Mammary epithelial cell (primary cell): ENCODE measurements at regions of chr16 and their contacts with region 1.

Region 1: GRCh38 chr16:70715055-70715858 is 29.4 kb upstream of the MTSS2 start:
- DNase-seq: peak; percentile 99
- H3K4me3 ChIP-seq: no peak overlapping the region
- H3K27ac ChIP-seq: peak overlapping the region; percentile 67
- H3K4me1 ChIP-seq: peaks cover 34% of the 10 kb centered on the region
- H3K27me3 ChIP-seq: no peaks in the 10 kb centered on the region
- CTCF ChIP-seq: peak in 1 of 2 donors; percentile 43

Region 2: DNA sequence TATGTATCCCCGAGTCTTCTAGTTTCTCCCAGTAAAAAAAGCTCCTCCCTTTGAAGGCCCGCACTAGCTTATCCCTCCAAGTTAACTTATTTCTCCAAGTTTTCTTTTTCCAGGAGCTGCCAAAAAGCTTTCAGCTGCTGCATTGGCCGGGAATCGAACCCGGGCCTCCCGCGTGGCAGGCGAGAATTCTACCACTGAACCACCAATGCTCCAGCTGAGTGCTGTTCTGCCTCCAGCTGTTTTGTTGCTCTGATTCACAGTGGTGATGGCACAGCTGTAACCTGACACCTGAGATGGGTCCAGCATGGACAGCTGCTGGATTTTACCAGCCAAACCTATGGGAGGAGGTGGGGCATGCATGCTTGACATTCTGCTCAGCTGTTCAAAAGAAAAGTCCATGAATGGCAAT is 63.6 kb after region 1 on chr16:
- CTCF ChIA-PET with region 1: no interaction called
- dilution Hi-C with region 1: loop called (anchors 5 kb)
- in situ Hi-C with region 1: no loop called
- intact Hi-C with region 1: no loop called
- DNase-seq: peak; percentile 88
- H3K4me3 ChIP-seq: no peak overlapping the region
- H3K27ac ChIP-seq: no peak overlapping the region
- H3K4me1 ChIP-seq: peaks cover 8% of the 10 kb centered on the region
- H3K27me3 ChIP-seq: no peaks in the 10 kb centered on the region
- CTCF ChIP-seq: no peak